Lower leg skin (tissue), 4 donors: ENCODE measurements at regions of chr14 and their contacts with region 1.

Region 1: GRCh38 chr14:61456720-61457119 is 135.3 kb downstream of the PRKCH start:
- DNase-seq: peak; percentile 87 to 95
- H3K4me3 ChIP-seq: no peak overlapping the region
- CTCF ChIP-seq: no peak
- POLR2A ChIP-seq: no peak

Region 2: GRCh38 chr14:61296719-61297502 is 159.8 kb before region 1 on chr14:
- intact Hi-C with region 1: loop called (anchors 10 kb)
- DNase-seq: no peak
- H3K4me3 ChIP-seq: no peak overlapping the region
- CTCF ChIP-seq: no peak
- POLR2A ChIP-seq: no peak

Region 3: GRCh38 chr14:61837336-61838229 is 380.9 kb after region 1 on chr14:
- intact Hi-C with region 1: loop called (anchors 5 kb)
- DNase-seq: peak; percentile 81 to 94
- H3K4me3 ChIP-seq: no peak overlapping the region
- CTCF ChIP-seq: peak in 1 of 3 donors; percentile 58
- POLR2A ChIP-seq: no peak